ENCODE measurements at regions of chr6 and their contacts with region 1.

Region 1: DNA sequence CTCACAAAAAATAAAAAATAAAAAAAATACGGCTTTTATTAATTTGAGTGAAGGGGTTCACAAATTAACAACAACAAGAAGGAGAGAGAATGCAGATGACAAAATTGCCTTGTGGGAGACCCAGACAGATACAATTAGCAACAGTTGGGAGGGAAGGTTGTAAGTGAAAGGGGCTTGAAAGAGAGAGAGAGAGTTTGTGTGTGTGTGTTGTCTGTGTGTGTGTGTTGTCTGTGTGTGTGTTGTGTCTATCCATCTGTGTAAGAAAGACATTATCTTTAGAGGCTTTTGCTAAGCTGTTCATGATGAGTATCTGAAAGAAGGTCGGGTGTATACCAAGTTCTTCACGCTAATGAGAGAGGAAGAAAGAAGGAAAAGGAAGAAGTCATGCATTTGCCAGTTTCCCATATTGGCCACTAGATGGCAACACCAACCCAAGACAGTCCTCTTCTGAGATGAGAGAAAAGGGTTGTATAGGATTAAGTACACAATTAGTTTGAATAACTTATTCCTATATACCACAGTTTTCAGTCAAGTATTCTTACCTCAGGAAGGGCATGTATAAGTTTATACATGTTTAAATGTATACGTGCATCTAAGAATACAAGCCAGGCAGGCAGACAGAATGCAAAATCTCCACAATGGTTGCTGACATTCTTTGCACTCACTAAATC is 63.7 kb upstream of the CD2AP start:
- DNase-seq: peak; percentile 79
- ATAC-seq: peak; percentile 76
- H3K4me3 ChIP-seq: peak overlapping the region; percentile 46 to 83 (median 58)
- H3K4me3 Mint-ChIP-seq: peak overlapping the region; percentile 84
- H3K27ac ChIP-seq: peak overlapping the region in 1 of 2 donors; percentile 48
- H3K27ac Mint-ChIP-seq: peak overlapping the region; percentile 71
- H3K4me1 ChIP-seq: peaks cover 13 to 17% of the 10 kb centered on the region in 2 donors
- H3K4me1 Mint-ChIP-seq: peaks cover 16% of the 10 kb centered on the region
- H3K27me3 ChIP-seq: no peaks in the 10 kb centered on the region
- H3K27me3 Mint-ChIP-seq: peaks cover 3% of the 10 kb centered on the region
- CTCF ChIP-seq: peak; percentile 95

Region 2: DNA sequence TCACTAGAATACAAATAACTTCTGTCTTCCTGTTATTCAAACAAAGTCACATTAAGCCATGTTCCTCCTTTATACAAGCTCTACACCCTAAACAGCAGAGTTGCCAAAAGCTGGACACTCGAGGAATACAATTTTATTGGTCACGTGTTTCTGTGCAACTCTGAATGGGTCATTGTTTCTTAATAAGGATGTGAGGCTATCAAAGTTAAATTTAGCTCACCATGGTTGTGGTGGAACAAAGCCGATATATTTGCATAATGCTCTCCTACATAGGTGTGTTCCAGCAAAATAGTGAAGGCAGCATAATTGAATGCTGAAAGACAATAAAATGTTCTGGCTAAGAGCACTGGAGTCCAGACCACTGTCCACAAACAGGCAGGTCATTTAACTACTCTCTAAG is 26.8 kb after region 1 on chr6:
- CTCF ChIA-PET with region 1: interaction called, 3 read pairs
- POLR2A ChIA-PET with region 1: no interaction called
- intact Hi-C with region 1: loop called (anchors 2 kb)
- DNase-seq: peak; percentile 53
- ATAC-seq: peak; percentile 37
- H3K4me3 ChIP-seq: no peak overlapping the region
- H3K4me3 Mint-ChIP-seq: peak overlapping the region; percentile 71
- H3K27ac ChIP-seq: no peak overlapping the region
- H3K27ac Mint-ChIP-seq: no peak overlapping the region
- H3K4me1 ChIP-seq: peaks cover 36 to 38% of the 10 kb centered on the region in 2 donors
- H3K4me1 Mint-ChIP-seq: peaks cover 40% of the 10 kb centered on the region
- H3K27me3 ChIP-seq: no peaks in the 10 kb centered on the region
- H3K27me3 Mint-ChIP-seq: no peaks in the 10 kb centered on the region
- CTCF ChIP-seq: no peak

Region 3: GRCh38 chr6:47571488-47571887 is 157.6 kb after region 1 on chr6:
- CTCF ChIA-PET with region 1: no interaction called
- POLR2A ChIA-PET with region 1: no interaction called
- intact Hi-C with region 1: loop called (anchors 5 kb)
- DNase-seq: no peak
- ATAC-seq: no peak
- H3K4me3 ChIP-seq: no peak overlapping the region
- H3K4me3 Mint-ChIP-seq: no peak overlapping the region
- H3K27ac ChIP-seq: no peak overlapping the region
- H3K27ac Mint-ChIP-seq: no peak overlapping the region
- H3K4me1 ChIP-seq: no peaks in the 10 kb centered on the region
- H3K4me1 Mint-ChIP-seq: no peaks in the 10 kb centered on the region
- H3K27me3 ChIP-seq: no peaks in the 10 kb centered on the region
- H3K27me3 Mint-ChIP-seq: no peaks in the 10 kb centered on the region
- CTCF ChIP-seq: no peak

Region 4: GRCh38 chr6:47631269-47631772 is 217.4 kb after region 1 on chr6:
- CTCF ChIA-PET with region 1: interaction called, 16 read pairs
- POLR2A ChIA-PET with region 1: no interaction called
- intact Hi-C with region 1: loop called (anchors 1 kb)
- DNase-seq: peak; percentile 59
- ATAC-seq: no peak
- H3K4me3 ChIP-seq: no peak overlapping the region
- H3K4me3 Mint-ChIP-seq: no peak overlapping the region
- H3K27ac ChIP-seq: no peak overlapping the region
- H3K27ac Mint-ChIP-seq: no peak overlapping the region
- H3K4me1 ChIP-seq: no peaks in the 10 kb centered on the region
- H3K4me1 Mint-ChIP-seq: no peaks in the 10 kb centered on the region
- H3K27me3 ChIP-seq: no peaks in the 10 kb centered on the region
- H3K27me3 Mint-ChIP-seq: no peaks in the 10 kb centered on the region
- CTCF ChIP-seq: peak; percentile 75

Region 5: GRCh38 chr6:47655719-47656595 is 242.1 kb after region 1 on chr6:
- CTCF ChIA-PET with region 1: no interaction called
- POLR2A ChIA-PET with region 1: no interaction called
- intact Hi-C with region 1: no loop called
- DNase-seq: no peak
- ATAC-seq: no peak
- H3K4me3 ChIP-seq: no peak overlapping the region
- H3K4me3 Mint-ChIP-seq: no peak overlapping the region
- H3K27ac ChIP-seq: no peak overlapping the region
- H3K27ac Mint-ChIP-seq: no peak overlapping the region
- H3K4me1 ChIP-seq: peaks cover 0 to 5% of the 10 kb centered on the region in 2 donors
- H3K4me1 Mint-ChIP-seq: no peaks in the 10 kb centered on the region
- H3K27me3 ChIP-seq: peaks cover 0 to 6% (median 0%) of the 10 kb centered on the region in 4 experiments
- H3K27me3 Mint-ChIP-seq: peaks cover 12% of the 10 kb centered on the region
- CTCF ChIP-seq: no peak

Region 6: GRCh38 chr6:47780510-47781356 is 366.8 kb after region 1 on chr6:
- CTCF ChIA-PET with region 1: interaction called, 59 read pairs
- POLR2A ChIA-PET with region 1: no interaction called
- intact Hi-C with region 1: loop called (anchors 1 kb)
- DNase-seq: peak; percentile 55
- ATAC-seq: peak; percentile 64
- H3K4me3 ChIP-seq: no peak overlapping the region
- H3K4me3 Mint-ChIP-seq: peak overlapping the region; percentile 6
- H3K27ac ChIP-seq: no peak overlapping the region
- H3K27ac Mint-ChIP-seq: no peak overlapping the region
- H3K4me1 ChIP-seq: peaks cover 3 to 4% of the 10 kb centered on the region in 2 donors
- H3K4me1 Mint-ChIP-seq: peaks cover 8% of the 10 kb centered on the region
- H3K27me3 ChIP-seq: peaks cover 0 to 9% (median 0%) of the 10 kb centered on the region in 4 experiments
- H3K27me3 Mint-ChIP-seq: peaks cover 21% of the 10 kb centered on the region
- CTCF ChIP-seq: peak; percentile 72

Region 7: DNA sequence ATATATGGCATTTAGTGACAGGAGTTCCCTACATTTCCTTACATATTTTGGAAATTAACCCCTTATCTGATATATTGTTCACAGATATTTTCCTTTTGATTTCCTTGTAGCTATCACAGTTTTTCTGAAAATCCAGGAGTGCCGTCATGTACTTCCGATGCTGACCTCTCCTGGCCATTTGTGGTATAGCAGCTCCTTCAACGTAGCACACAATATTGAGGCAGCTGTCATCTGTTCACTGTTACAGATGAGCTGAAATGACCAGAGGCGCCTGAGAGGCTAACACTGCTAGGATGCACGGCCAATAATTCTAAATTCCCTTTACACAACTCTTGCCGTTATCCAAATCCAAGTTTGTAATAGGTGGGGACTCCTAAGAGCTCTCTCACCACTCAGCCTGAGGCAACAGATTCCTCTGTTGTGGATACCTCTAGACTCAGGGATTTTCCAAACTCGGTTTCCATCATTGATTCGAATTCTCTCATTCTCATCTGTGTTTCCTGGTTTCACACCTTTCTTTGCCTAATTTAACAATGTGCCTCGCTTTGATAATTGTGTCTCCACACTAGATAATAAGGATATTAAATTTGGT is 1996.2 kb after region 1 on chr6:
- CTCF ChIA-PET with region 1: interaction called, 4 read pairs
- POLR2A ChIA-PET with region 1: no interaction called
- intact Hi-C with region 1: loop called (anchors 2 kb)
- DNase-seq: peak; percentile 53
- ATAC-seq: peak; percentile 54
- H3K4me3 ChIP-seq: no peak overlapping the region
- H3K4me3 Mint-ChIP-seq: no peak overlapping the region
- H3K27ac ChIP-seq: no peak overlapping the region
- H3K27ac Mint-ChIP-seq: no peak overlapping the region
- H3K4me1 ChIP-seq: no peaks in the 10 kb centered on the region
- H3K4me1 Mint-ChIP-seq: no peaks in the 10 kb centered on the region
- H3K27me3 ChIP-seq: no peaks in the 10 kb centered on the region
- H3K27me3 Mint-ChIP-seq: peaks cover 9% of the 10 kb centered on the region
- CTCF ChIP-seq: peak; percentile 89